OCI-LY7 (cell line): ENCODE measurements at regions of chr3 and their contacts with region 1.

Region 1: DNA sequence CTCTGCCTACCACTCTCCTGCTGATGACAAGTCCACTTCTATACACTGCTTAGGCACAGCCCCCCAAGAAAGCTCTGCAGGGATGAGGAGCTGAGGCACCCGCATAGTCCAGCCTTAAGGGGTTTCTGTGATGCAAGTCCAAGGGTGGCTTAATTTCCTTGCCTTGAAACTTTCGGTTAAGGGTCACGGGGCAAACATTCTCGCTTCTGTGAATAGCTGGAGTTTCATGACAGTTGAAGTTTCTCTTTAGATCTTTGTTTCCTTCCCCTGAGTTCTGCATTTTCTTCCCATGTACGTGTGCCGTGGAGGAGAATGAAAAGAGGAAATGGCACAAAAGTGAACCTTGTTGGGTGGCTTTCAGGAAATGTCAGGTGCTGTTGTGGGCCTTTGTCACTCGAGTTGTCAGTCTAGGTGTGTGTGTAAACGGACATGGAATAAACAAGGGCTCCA is 7.0 kb downstream of the GPR160 start:
- DNase-seq: peak; percentile 95
- H3K4me3 ChIP-seq: peak overlapping the region; percentile 57
- H3K27ac ChIP-seq: peak overlapping the region; percentile 98
- H3K4me1 ChIP-seq: peaks cover 75% of the 10 kb centered on the region
- CTCF ChIP-seq: no peak

Region 2: GRCh38 chr3:170062769-170063168 is 17.9 kb after region 1 on chr3:
- CTCF ChIA-PET with region 1: interaction called, 4 read pairs
- POLR2A ChIA-PET with region 1: interaction called, 143 read pairs
- intact Hi-C with region 1: no loop called
- DNase-seq: no peak
- H3K4me3 ChIP-seq: no peak overlapping the region
- H3K27ac ChIP-seq: peak overlapping the region; percentile 94
- H3K4me1 ChIP-seq: peaks cover 63% of the 10 kb centered on the region
- CTCF ChIP-seq: peak; percentile 69